Ascending aorta (tissue), 2 donors: ENCODE measurements at regions of chr1 and their contacts with region 1.

Region 1: GRCh38 chr1:161201828-161202725 is at the start of gene NDUFS2:
- DNase-seq: peak; percentile 94 to 100
- H3K4me3 ChIP-seq: peak within 1 kb of the TSS; percentile 77 to 89
- H3K27ac ChIP-seq: peak within 1 kb of the TSS; percentile 92 to 97
- H3K4me1 ChIP-seq: peaks cover 8 to 32% of the 10 kb centered on the region in 2 donors
- H3K27me3 ChIP-seq: no peaks in the 10 kb centered on the region
- CTCF ChIP-seq: no peak
- total RNA-seq, gene NDUFS2: 107 TPM

Region 2: DNA sequence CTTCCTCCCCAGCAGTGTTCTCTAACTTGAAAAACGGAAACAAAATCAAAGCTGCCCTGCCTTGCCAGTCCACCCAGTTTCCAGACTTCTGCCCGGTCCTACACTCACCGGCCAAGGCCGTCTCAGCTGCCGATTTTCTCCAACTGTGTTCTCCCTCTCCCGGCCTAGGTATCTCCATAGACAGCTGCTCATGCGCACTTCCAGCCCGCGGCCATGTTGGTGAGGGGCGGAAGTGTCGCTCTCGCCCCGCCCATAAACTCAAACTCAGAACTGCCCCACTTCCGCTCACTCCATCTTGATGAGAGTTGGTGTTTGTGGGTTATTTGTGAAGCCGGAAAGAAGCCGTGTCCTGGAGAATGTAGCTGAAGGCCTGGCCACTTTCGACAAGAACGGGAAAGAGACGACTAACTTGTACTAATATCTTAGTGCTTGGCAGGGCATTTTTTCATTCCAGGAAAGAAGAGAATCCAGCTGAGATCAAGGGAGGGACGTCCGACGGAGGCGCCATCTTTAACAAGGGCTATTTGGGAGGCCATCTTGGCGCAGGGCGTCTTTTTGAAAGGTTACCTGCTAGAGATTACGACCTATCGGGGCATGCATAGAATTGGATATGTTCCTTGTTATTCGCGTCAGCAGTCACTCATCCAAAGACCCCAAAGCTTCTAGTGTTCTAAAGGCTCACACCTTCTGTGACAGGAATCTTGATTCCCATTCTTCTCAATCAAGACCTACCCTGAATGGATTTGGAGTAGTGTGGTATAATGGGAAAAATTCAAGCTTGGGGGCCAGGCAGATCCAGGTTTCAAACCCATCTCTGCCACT is 156.1 kb before region 1 on chr1 and contains the start of gene USF1:
- intact Hi-C with region 1: loop called (anchors 10 kb)
- DNase-seq: peak; percentile 79 to 97
- H3K4me3 ChIP-seq: peak within 1 kb of the TSS; percentile 63 to 95
- H3K27ac ChIP-seq: peak within 1 kb of the TSS; percentile 93 to 96
- H3K4me1 ChIP-seq: peaks cover 6 to 13% of the 10 kb centered on the region in 2 donors
- H3K27me3 ChIP-seq: no peaks in the 10 kb centered on the region
- CTCF ChIP-seq: no peak
- total RNA-seq, gene USF1: 68.5 TPM

Region 3: GRCh38 chr1:161177112-161177935 is 24.8 kb before region 1 on chr1 and contains the start of gene B4GALT3:
- intact Hi-C with region 1: loop called (anchors 1 kb)
- DNase-seq: peak in 1 of 2 donors; percentile 94
- H3K4me3 ChIP-seq: peak within 1 kb of the TSS; percentile 79 to 93
- H3K27ac ChIP-seq: peak within 1 kb of the TSS; percentile 87 to 96
- H3K4me1 ChIP-seq: peaks cover 0 to 19% of the 10 kb centered on the region in 2 donors
- H3K27me3 ChIP-seq: no peaks in the 10 kb centered on the region
- CTCF ChIP-seq: no peak
- total RNA-seq, gene B4GALT3: 26.9 TPM

Region 4: GRCh38 chr1:161225534-161226319 is 23.6 kb after region 1 on chr1 and contains the start of gene TOMM40L:
- intact Hi-C with region 1: loop called (anchors 1 kb)
- DNase-seq: peak; percentile 79 to 96
- H3K4me3 ChIP-seq: peak within 1 kb of the TSS; percentile 84 to 94
- H3K27ac ChIP-seq: peak within 1 kb of the TSS; percentile 51 to 65
- H3K4me1 ChIP-seq: peaks cover 7 to 16% of the 10 kb centered on the region in 2 donors
- H3K27me3 ChIP-seq: no peaks in the 10 kb centered on the region
- CTCF ChIP-seq: peak in 2 of 3 experiments; percentile 27 to 36
- total RNA-seq, gene TOMM40L: 26.6 TPM

Region 5: GRCh38 chr1:161382214-161383019 is 180.3 kb after region 1 on chr1:
- intact Hi-C with region 1: loop called (anchors 5 kb)
- DNase-seq: peak in 1 of 2 donors; percentile 81
- H3K4me3 ChIP-seq: no peak overlapping the region
- H3K27ac ChIP-seq: peak overlapping the region; percentile 78
- H3K4me1 ChIP-seq: peaks cover 0 to 4% of the 10 kb centered on the region in 2 donors
- H3K27me3 ChIP-seq: no peaks in the 10 kb centered on the region
- CTCF ChIP-seq: peak; percentile 53 to 71 (median 62)

Region 6: GRCh38 chr1:161749509-161750407 is 547.7 kb after region 1 on chr1 and contains the start of gene DUSP12:
- intact Hi-C with region 1: loop called (anchors 10 kb)
- DNase-seq: peak; percentile 69 to 97
- H3K4me3 ChIP-seq: peak within 1 kb of the TSS; percentile 78 to 90
- H3K27ac ChIP-seq: peak within 1 kb of the TSS; percentile 80 to 85
- H3K4me1 ChIP-seq: peaks cover 4 to 10% of the 10 kb centered on the region in 2 donors
- H3K27me3 ChIP-seq: no peaks in the 10 kb centered on the region
- CTCF ChIP-seq: peak in 2 of 3 experiments; percentile 7 to 31
- total RNA-seq, gene DUSP12: 21.0 TPM